Caco-2 (cell line): ENCODE measurements at regions of chr10 and their contacts with region 1.

Region 1: GRCh38 chr10:112775381-112775780 is 174.7 kb upstream of the TCF7L2 start:
- DNase-seq: peak in 1 of 2 experiments; percentile 33
- H3K4me3 ChIP-seq: no peak overlapping the region
- H3K4me3 Mint-ChIP-seq: no peak overlapping the region
- H3K27ac Mint-ChIP-seq: no peak overlapping the region
- H3K4me1 ChIP-seq: peaks cover 59% of the 10 kb centered on the region
- H3K4me1 Mint-ChIP-seq: peaks cover 43% of the 10 kb centered on the region
- H3K27me3 ChIP-seq: no peaks in the 10 kb centered on the region
- H3K27me3 Mint-ChIP-seq: no peaks in the 10 kb centered on the region
- CTCF ChIP-seq: peak; percentile 32 to 34

Region 2: GRCh38 chr10:112589081-112589480 is 186.3 kb before region 1 on chr10:
- CTCF ChIA-PET with region 1: no interaction called
- POLR2A ChIA-PET with region 1: interaction called, 13 read pairs
- intact Hi-C with region 1: no loop called
- DNase-seq: no peak
- H3K4me3 ChIP-seq: no peak overlapping the region
- H3K4me3 Mint-ChIP-seq: no peak overlapping the region
- H3K27ac Mint-ChIP-seq: no peak overlapping the region
- H3K4me1 ChIP-seq: 0 out of 2 replicates have a peak, but pooled peaks cover 4% of the 10 kb centered on the region
- H3K4me1 Mint-ChIP-seq: peaks cover 9% of the 10 kb centered on the region
- H3K27me3 ChIP-seq: no peaks in the 10 kb centered on the region
- H3K27me3 Mint-ChIP-seq: no peaks in the 10 kb centered on the region
- CTCF ChIP-seq: no peak

Region 3: GRCh38 chr10:112728118-112728883 is 47.1 kb before region 1 on chr10:
- CTCF ChIA-PET with region 1: interaction called, 11 read pairs
- POLR2A ChIA-PET with region 1: no interaction called
- intact Hi-C with region 1: loop called (anchors 1 kb)
- DNase-seq: peak; percentile 66 to 69
- H3K4me3 ChIP-seq: no peak overlapping the region
- H3K4me3 Mint-ChIP-seq: peak overlapping the region; percentile 50
- H3K27ac Mint-ChIP-seq: peak overlapping the region; percentile 94
- H3K4me1 ChIP-seq: peaks cover 78% of the 10 kb centered on the region
- H3K4me1 Mint-ChIP-seq: peaks cover 70% of the 10 kb centered on the region
- H3K27me3 ChIP-seq: no peaks in the 10 kb centered on the region
- H3K27me3 Mint-ChIP-seq: no peaks in the 10 kb centered on the region
- CTCF ChIP-seq: no peak

Region 4: GRCh38 chr10:112741830-112742411 is 33.5 kb before region 1 on chr10:
- CTCF ChIA-PET with region 1: no interaction called
- POLR2A ChIA-PET with region 1: no interaction called
- intact Hi-C with region 1: loop called (anchors 1 kb)
- DNase-seq: no peak
- H3K4me3 ChIP-seq: no peak overlapping the region
- H3K4me3 Mint-ChIP-seq: no peak overlapping the region
- H3K27ac Mint-ChIP-seq: no peak overlapping the region
- H3K4me1 ChIP-seq: peaks cover 82% of the 10 kb centered on the region
- H3K4me1 Mint-ChIP-seq: peaks cover 70% of the 10 kb centered on the region
- H3K27me3 ChIP-seq: no peaks in the 10 kb centered on the region
- H3K27me3 Mint-ChIP-seq: no peaks in the 10 kb centered on the region
- CTCF ChIP-seq: no peak

Region 5: GRCh38 chr10:112750427-112751167 is 24.8 kb before region 1 on chr10:
- CTCF ChIA-PET with region 1: interaction called, 4 read pairs
- POLR2A ChIA-PET with region 1: interaction called, 3 read pairs
- intact Hi-C with region 1: loop called (anchors 1 kb)
- DNase-seq: peak in 1 of 2 experiments; percentile 52
- H3K4me3 ChIP-seq: no peak overlapping the region
- H3K4me3 Mint-ChIP-seq: peak overlapping the region; percentile 42
- H3K27ac Mint-ChIP-seq: peak overlapping the region; percentile 87
- H3K4me1 ChIP-seq: peaks cover 69% of the 10 kb centered on the region
- H3K4me1 Mint-ChIP-seq: peaks cover 58% of the 10 kb centered on the region
- H3K27me3 ChIP-seq: no peaks in the 10 kb centered on the region
- H3K27me3 Mint-ChIP-seq: no peaks in the 10 kb centered on the region
- CTCF ChIP-seq: no peak

Region 6: GRCh38 chr10:112761099-112761655 is 14.2 kb before region 1 on chr10:
- CTCF ChIA-PET with region 1: no interaction called
- POLR2A ChIA-PET with region 1: no interaction called
- intact Hi-C with region 1: loop called (anchors 2 kb)
- DNase-seq: no peak
- H3K4me3 ChIP-seq: no peak overlapping the region
- H3K4me3 Mint-ChIP-seq: no peak overlapping the region
- H3K27ac Mint-ChIP-seq: no peak overlapping the region
- H3K4me1 ChIP-seq: peaks cover 28% of the 10 kb centered on the region
- H3K4me1 Mint-ChIP-seq: peaks cover 38% of the 10 kb centered on the region
- H3K27me3 ChIP-seq: no peaks in the 10 kb centered on the region
- H3K27me3 Mint-ChIP-seq: no peaks in the 10 kb centered on the region
- CTCF ChIP-seq: no peak

Region 7: DNA sequence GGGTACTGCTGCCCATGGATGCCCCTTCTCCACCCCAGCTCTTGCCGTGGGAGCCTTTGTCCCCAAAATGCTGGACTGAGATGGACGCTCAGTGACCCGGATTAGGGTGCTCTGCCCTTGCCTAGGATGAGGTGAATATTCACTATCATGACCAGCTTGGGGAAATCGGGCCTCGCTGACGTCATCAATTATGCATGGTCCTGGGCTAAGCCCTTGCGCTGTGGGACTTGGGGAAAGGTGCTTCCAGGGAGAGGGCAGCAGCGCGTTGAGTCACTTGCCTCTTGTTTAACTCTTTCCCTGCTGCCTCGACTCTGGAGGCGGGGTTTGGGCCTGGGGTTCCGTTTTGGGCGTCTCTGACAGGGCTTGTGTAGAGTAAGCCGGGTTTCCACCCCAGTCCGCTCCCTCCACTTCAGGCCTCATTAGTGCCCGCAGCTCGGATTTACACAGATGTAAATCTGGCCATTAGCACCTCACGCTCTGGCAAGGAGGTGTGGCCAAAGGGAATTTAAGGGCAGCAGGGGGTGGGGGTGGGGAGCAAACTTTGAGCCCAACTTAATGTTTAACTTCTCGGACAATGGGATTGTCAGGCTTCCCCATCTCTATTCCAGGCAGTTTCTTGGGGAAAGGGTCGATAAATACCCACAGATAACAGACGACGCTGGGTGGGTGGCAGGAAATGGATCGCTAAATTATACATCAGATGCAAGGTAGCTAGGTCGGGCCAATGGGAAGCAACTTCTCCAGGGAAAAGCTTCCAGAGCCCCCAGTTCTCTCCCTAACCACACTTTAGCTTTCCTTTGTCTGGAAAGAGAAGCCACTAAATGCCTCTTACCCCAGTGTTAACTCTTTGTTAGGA is 123.4 kb after region 1 on chr10:
- CTCF ChIA-PET with region 1: interaction called, 3 read pairs
- POLR2A ChIA-PET with region 1: no interaction called
- intact Hi-C with region 1: loop called (anchors 2 kb)
- DNase-seq: peak; percentile 83 to 92
- H3K4me3 ChIP-seq: peak overlapping the region; percentile 36
- H3K4me3 Mint-ChIP-seq: peak overlapping the region; percentile 84
- H3K27ac Mint-ChIP-seq: peak overlapping the region; percentile 88
- H3K4me1 ChIP-seq: peaks cover 20% of the 10 kb centered on the region
- H3K4me1 Mint-ChIP-seq: peaks cover 12% of the 10 kb centered on the region
- H3K27me3 ChIP-seq: no peaks in the 10 kb centered on the region
- H3K27me3 Mint-ChIP-seq: no peaks in the 10 kb centered on the region
- CTCF ChIP-seq: no peak